HCT116 (cell line): ENCODE measurements at regions of chr6 and their contacts with region 1.

Region 1: DNA sequence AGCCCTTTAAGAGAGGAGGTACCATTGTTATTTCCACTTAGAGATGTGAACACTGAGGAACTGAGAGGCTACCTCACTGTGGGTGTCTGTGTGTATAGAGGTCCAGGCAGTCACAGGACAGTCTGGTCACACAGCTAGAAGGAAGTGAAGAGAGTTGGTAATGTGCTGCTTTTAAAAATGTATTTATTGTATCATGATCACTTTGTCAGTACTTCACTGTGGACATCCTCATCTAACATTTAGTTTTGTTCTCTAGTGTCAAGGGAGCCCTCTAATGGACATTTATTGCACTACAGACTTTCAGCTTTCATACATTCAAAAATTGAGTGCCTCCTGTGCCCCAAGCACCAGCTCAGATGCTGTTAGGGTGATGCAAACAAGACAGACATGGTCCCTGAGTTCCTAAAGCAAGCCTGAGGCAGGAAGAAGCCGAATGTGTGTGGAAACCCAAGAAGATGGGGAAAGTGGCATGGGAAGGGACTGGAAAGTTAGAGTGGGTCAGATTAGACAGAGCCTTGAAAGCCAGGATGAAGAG is 123.0 kb downstream of the SLC16A10 start:
- DNase-seq: peak; percentile 45
- ATAC-seq: peak; percentile 85
- H3K4me3 ChIP-seq: no peak overlapping the region
- H3K27ac ChIP-seq: no peak overlapping the region
- H3K4me1 ChIP-seq: no peaks in the 10 kb centered on the region
- H3K27me3 ChIP-seq: no peaks in the 10 kb centered on the region
- CTCF ChIP-seq: peak; percentile 62 to 78 (median 75); a peak in 5 of 6 replicates
- POLR2A ChIP-seq: no peak
- RAD21 ChIP-seq: peak; percentile 86

Region 2: DNA sequence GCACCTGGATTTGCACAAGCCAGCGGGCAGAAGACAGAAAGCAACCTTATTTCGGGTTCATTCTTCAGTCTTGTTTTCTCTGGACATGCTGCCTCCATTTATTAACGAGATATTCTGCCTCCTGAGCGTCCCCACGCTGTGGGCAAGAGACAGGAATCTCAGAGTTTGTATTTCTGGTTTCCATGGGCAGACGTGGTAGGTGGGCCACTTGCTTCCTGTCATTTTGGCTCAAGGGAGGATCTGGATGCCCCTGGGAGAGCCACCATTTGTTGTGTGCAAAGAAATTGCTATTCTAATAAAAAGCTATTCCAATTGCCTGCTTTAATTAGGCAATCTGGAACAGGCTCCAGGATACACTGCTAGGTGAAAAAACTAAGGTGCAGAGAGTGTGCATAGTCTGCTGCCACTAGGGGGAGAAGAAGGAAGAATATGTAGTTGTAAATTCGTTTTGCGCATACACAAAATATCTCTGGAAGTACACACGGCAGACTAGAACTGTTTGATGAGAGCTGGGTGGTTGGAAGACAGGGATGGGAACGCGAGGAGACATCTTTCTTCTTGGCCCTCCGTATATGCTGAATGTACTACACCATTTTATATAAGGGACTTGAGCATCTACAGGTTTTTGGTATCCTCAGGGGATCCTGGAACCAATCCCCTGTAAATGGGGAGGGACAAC is 153.0 kb before region 1 on chr6:
- CTCF ChIA-PET with region 1: interaction called, 8 read pairs
- POLR2A ChIA-PET with region 1: no interaction called
- RAD21 ChIA-PET with region 1: no interaction called
- intact Hi-C with region 1: loop called (anchors 1 kb)
- DNase-seq: peak; percentile 50
- ATAC-seq: peak; percentile 92
- H3K4me3 ChIP-seq: no peak overlapping the region
- H3K27ac ChIP-seq: no peak overlapping the region
- H3K4me1 ChIP-seq: no peaks in the 10 kb centered on the region
- H3K27me3 ChIP-seq: no peaks in the 10 kb centered on the region
- CTCF ChIP-seq: peak; percentile 85 to 87 (median 86)
- POLR2A ChIP-seq: no peak
- RAD21 ChIP-seq: peak; percentile 79

Region 3: GRCh38 chr6:111187874-111188273 is 22.4 kb before region 1 on chr6:
- CTCF ChIA-PET with region 1: no interaction called
- POLR2A ChIA-PET with region 1: no interaction called
- RAD21 ChIA-PET with region 1: no interaction called
- intact Hi-C with region 1: no loop called
- DNase-seq: no peak
- ATAC-seq: no peak
- H3K4me3 ChIP-seq: no peak overlapping the region
- H3K27ac ChIP-seq: no peak overlapping the region
- H3K4me1 ChIP-seq: no peaks in the 10 kb centered on the region
- H3K27me3 ChIP-seq: no peaks in the 10 kb centered on the region
- CTCF ChIP-seq: no peak
- POLR2A ChIP-seq: no peak
- RAD21 ChIP-seq: no peak

Region 4: DNA sequence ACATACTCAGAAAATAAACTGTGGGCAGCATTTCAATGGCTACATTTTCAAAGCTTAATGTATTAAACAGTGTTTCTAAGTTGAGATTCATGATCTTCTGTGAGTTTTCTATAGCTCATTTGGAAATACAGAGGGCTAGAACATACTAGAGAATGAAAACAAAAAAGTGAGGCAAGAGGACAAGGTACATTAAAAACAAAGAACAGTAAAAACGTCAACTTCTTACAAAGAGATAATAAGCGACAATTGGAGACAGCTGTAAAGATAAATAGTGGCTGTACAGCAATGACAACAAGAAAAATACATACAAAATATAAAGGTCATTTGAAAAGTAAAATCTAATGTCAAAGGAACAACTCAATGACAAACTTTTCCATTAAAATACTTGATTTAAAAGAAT is 178.4 kb after region 1 on chr6:
- CTCF ChIA-PET with region 1: no interaction called
- POLR2A ChIA-PET with region 1: no interaction called
- RAD21 ChIA-PET with region 1: no interaction called
- intact Hi-C with region 1: no loop called
- DNase-seq: no peak
- ATAC-seq: no peak
- H3K4me3 ChIP-seq: no peak overlapping the region
- H3K27ac ChIP-seq: no peak overlapping the region
- H3K4me1 ChIP-seq: no peaks in the 10 kb centered on the region
- H3K27me3 ChIP-seq: no peaks in the 10 kb centered on the region
- CTCF ChIP-seq: no peak
- POLR2A ChIP-seq: no peak
- RAD21 ChIP-seq: no peak